ENCODE measurements at regions of chr5 and their contacts with region 1.

Region 1: GRCh38 chr5:30040488-30041118 is 1152.9 kb upstream of the CDH6 start:
- DNase-seq: peak; percentile 60
- H3K4me3 Mint-ChIP-seq: no peak overlapping the region
- H3K27ac Mint-ChIP-seq: no peak overlapping the region
- H3K4me1 Mint-ChIP-seq: no peaks in the 10 kb centered on the region
- H3K27me3 Mint-ChIP-seq: no peaks in the 10 kb centered on the region

Region 2: GRCh38 chr5:29367176-29367833 is 673.3 kb before region 1 on chr5:
- intact Hi-C with region 1: no loop called
- DNase-seq: no peak
- H3K4me3 Mint-ChIP-seq: no peak overlapping the region
- H3K27ac Mint-ChIP-seq: no peak overlapping the region
- H3K4me1 Mint-ChIP-seq: no peaks in the 10 kb centered on the region
- H3K27me3 Mint-ChIP-seq: no peaks in the 10 kb centered on the region

Region 3: DNA sequence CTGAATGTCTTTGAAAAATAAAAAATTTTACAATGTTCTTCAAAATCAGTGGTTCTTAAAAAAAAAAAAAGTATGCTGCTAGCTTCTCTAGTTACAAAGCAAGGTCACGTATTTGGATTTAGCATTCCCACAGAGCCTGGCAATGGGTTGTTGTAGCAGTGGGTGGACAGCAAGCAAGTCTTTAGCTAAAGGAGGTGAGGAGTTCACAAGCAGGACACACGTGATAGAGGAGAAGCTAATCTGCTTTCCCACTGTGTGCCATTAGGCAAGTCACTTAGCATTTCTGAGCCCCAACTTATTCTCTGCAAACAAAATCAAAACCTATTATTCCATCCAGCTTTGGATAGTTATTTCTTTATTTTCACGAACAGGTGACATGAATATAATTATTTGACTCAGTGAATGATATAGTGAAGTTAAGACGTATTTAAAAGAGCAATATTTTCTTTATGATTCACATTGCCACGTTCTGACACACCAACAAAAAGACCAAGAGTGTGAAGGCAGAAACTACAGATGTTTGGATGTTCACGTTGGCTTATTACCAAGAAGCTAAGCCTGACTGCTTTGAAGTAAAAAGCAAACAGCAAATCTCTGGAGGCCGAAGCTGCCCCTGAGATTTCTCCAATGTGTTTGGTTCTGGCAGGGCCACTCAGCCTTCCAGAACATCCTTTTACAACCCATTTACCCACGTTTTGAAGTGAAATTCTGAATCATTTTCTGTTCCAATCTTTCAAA is 540.8 kb after region 1 on chr5:
- intact Hi-C with region 1: no loop called
- DNase-seq: no peak
- H3K4me3 Mint-ChIP-seq: no peak overlapping the region
- H3K27ac Mint-ChIP-seq: no peak overlapping the region
- H3K4me1 Mint-ChIP-seq: no peaks in the 10 kb centered on the region
- H3K27me3 Mint-ChIP-seq: no peaks in the 10 kb centered on the region

Region 4: DNA sequence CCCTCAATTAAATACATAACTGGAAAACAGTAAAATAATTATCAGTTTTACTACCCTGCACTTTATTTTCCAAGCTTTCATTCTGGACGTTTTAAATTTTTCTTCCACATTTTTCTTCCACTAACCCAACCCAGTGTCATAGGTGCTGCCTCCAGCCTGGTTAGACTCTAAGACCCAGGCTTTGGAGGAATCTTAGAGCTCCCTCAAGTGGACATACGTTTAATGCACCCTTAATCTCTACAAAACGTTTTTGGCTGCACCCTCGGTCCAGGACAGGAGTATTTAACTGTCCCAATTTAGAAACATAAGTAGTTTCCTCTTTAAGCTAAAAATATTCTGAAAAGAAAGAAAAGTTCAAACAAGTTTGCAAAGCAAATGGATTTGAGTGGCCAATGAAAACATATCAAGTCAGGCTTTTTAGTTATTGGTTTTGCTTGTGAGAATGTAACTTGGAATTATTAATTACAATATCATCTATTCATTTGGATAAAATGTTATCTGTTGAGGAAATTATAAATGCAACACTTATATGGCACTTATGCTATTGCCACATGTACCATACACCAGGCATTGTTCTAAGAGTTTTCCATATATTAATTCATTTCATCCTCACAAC is 1191.8 kb after region 1 on chr5:
- intact Hi-C with region 1: loop called (anchors 5 kb)
- DNase-seq: peak; percentile 59
- H3K4me3 Mint-ChIP-seq: no peak overlapping the region
- H3K27ac Mint-ChIP-seq: no peak overlapping the region
- H3K4me1 Mint-ChIP-seq: no peaks in the 10 kb centered on the region
- H3K27me3 Mint-ChIP-seq: no peaks in the 10 kb centered on the region

Measured in activated CD4-positive, alpha-beta T cell treated with anti-CD3 and anti-CD28 coated beads, Interleukin-2, amount 10 ng/mL, durations not matched to agents 24 days and 14 days (primary cell).